Body of pancreas (tissue), 4 donors: ENCODE measurements at regions of chr13 and their contacts with region 1.

Region 1: GRCh38 chr13:27826379-27827353 is 34.4 kb downstream of the GSX1 start:
- DNase-seq: peak; percentile 85 to 88 (median 87)
- ATAC-seq: peak; percentile 92
- H3K4me3 ChIP-seq: no peak overlapping the region
- H3K27ac ChIP-seq: peak overlapping the region in 2 of 4 donors; percentile 2 to 19
- H3K4me1 ChIP-seq: peaks cover 22% of the 10 kb centered on the region
- H3K27me3 ChIP-seq: peaks cover 3 to 4% of the 10 kb centered on the region in 2 donors
- CTCF ChIP-seq: peak; percentile 82 to 95 (median 91)
- POLR2A ChIP-seq: no peak

Region 2: DNA sequence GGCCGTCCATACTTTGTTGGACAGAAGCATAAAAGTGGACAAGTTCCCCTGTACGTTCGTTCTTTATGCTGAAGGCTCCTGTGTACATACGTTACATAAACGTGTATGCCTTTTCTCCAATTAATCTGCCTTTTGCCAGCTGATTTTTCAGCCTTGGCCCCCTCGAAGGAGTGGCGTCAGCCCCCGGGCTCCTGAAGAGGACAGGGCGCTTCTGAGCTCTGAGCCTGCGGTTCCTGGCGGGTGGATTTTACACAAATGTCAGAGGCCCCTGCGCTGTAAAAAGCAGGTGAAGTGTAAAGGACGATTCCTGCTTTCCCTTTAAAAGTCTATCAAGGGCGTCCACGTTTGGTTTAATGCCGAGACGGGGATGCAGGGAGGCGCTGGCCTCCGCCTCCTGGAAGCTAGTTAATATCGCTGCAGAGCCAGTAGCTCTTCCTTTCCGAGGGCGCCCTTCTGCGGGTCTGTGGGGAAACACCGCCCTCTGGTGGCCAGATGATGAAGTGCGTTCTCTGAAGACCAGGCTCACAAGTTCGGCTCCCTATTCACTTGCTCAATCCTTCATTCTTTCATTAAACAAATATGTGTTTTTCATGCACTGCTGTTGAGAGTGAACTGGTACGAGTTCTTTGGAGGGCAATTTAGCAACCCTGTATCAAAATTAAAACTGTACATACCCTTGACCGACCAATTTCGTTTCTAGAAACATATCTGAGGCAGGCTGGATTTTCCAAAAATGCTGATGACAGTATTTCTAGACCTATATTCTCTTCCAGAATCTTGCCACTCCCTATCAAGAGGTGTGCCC is 1128.1 kb before region 1 on chr13:
- intact Hi-C with region 1: no loop called
- DNase-seq: peak; percentile 77 to 85 (median 82)
- ATAC-seq: peak; percentile 86
- H3K4me3 ChIP-seq: no peak overlapping the region
- H3K27ac ChIP-seq: no peak overlapping the region
- H3K4me1 ChIP-seq: peaks cover 7% of the 10 kb centered on the region
- H3K27me3 ChIP-seq: no peaks in the 10 kb centered on the region
- CTCF ChIP-seq: peak; percentile 92 to 96 (median 94)
- POLR2A ChIP-seq: no peak

Region 3: GRCh38 chr13:27379694-27380641 is 446.7 kb before region 1 on chr13:
- intact Hi-C with region 1: loop called (anchors 10 kb)
- DNase-seq: peak; percentile 80 to 90 (median 88)
- ATAC-seq: peak; percentile 88
- H3K4me3 ChIP-seq: no peak overlapping the region
- H3K27ac ChIP-seq: peak overlapping the region in 3 of 4 donors; percentile 6 to 31 (median 21)
- H3K4me1 ChIP-seq: peaks cover 10% of the 10 kb centered on the region
- H3K27me3 ChIP-seq: no peaks in the 10 kb centered on the region
- CTCF ChIP-seq: peak; percentile 35 to 91 (median 82)
- POLR2A ChIP-seq: peak in 2 of 3 donors; percentile 12 to 22

Region 4: GRCh38 chr13:27533155-27533643 is 293.5 kb before region 1 on chr13:
- intact Hi-C with region 1: loop called (anchors 5 kb)
- DNase-seq: peak; percentile 90 to 94 (median 92)
- ATAC-seq: peak; percentile 98
- H3K4me3 ChIP-seq: no peak overlapping the region
- H3K27ac ChIP-seq: peak overlapping the region in 2 of 4 donors; percentile 49 to 57
- H3K4me1 ChIP-seq: peaks cover 7% of the 10 kb centered on the region
- H3K27me3 ChIP-seq: no peaks in the 10 kb centered on the region
- CTCF ChIP-seq: peak; percentile 92 to 99 (median 98)
- POLR2A ChIP-seq: no peak

Region 5: DNA sequence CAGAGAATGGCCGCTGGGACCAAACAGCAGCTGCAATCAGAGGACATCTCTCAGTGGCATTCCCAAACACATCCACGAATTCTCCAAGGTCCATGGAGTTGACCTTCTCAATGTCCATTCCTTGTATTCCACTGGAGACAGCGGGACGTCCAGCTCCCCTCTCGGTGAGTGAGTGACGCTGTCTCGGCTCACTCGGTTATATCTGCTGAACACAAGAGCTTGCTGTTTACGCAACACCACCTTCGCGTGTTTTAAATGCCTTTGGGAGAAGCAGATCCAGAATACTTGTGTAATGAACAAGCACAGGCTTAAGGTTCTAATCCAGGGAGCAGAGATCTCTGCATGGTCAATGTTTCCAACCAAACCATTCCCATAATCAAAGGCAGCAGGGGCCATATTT is 161.9 kb after region 1 on chr13 and contains the start of gene URAD:
- intact Hi-C with region 1: loop called (anchors 5 kb)
- DNase-seq: no peak
- ATAC-seq: no peak
- H3K4me3 ChIP-seq: no peak within 1 kb of the TSS
- H3K27ac ChIP-seq: no peak within 1 kb of the TSS
- H3K4me1 ChIP-seq: no peaks in the 10 kb centered on the region
- H3K27me3 ChIP-seq: no peaks in the 10 kb centered on the region
- CTCF ChIP-seq: no peak
- POLR2A ChIP-seq: no peak
- total RNA-seq, gene URAD: not detected